GM12878 (cell line): ENCODE measurements at regions of chr5 and their contacts with region 1.

Region 1: DNA sequence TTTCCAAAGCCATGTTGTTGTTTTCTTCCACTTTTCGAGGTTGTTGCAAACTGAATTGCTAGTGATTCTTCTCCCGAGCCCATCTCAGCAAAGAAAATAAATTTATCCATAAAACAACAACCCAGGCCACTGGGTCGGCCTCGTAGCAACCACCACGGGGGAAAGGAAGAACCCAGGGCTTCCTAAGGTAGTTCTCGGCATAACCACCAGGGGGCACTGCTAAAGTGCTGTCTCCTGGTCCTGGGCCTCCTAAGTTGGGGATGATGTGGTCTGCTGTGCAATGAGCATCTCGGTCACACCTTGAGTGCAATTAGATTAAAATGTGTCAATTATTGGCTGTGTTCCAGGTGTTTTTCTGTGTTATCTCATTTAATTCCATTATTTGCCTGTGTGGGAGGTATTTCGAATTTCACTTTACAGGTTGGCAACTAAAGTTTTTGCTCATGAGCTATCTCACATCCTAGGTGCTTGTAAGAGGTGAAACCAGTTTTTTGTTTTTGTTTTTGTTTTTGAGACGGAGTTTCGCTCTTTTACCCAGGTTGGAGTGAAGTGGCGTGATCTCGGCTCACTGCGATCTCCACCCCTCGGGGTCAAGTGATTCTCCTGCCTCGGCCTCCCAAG is 102.8 kb upstream of the DAP start:
- DNase-seq: peak; percentile 8
- ATAC-seq: peak; percentile 98
- H3K4me3 ChIP-seq: no peak overlapping the region
- H3K27ac ChIP-seq: no peak overlapping the region
- H3K4me1 ChIP-seq: no peaks in the 10 kb centered on the region
- H3K27me3 ChIP-seq: peaks cover under 1 to 1% of the 10 kb centered on the region in 2 experiments; a peak in 1 of 4 replicates
- CTCF ChIP-seq: peak; percentile 75 to 93 (median 91)
- EP300 ChIP-seq: no peak
- POLR2A ChIP-seq: no peak
- RAD21 ChIP-seq: peak; percentile 66

Region 2: GRCh38 chr5:10834695-10835094 is 29.2 kb before region 1 on chr5:
- CTCF ChIA-PET with region 1: no interaction called
- POLR2A ChIA-PET with region 1: no interaction called
- RAD21 ChIA-PET with region 1: no interaction called
- SMC1A ChIA-PET with region 1: no interaction called
- in situ Hi-C with region 1: no loop called
- intact Hi-C with region 1: no loop called
- DNase-seq: no peak
- ATAC-seq: no peak
- H3K4me3 ChIP-seq: no peak overlapping the region
- H3K27ac ChIP-seq: no peak overlapping the region
- H3K4me1 ChIP-seq: no peaks in the 10 kb centered on the region
- H3K27me3 ChIP-seq: no peaks in the 10 kb centered on the region; a peak in 1 of 4 replicates
- CTCF ChIP-seq: no peak
- EP300 ChIP-seq: no peak
- POLR2A ChIP-seq: no peak
- RAD21 ChIP-seq: no peak

Region 3: DNA sequence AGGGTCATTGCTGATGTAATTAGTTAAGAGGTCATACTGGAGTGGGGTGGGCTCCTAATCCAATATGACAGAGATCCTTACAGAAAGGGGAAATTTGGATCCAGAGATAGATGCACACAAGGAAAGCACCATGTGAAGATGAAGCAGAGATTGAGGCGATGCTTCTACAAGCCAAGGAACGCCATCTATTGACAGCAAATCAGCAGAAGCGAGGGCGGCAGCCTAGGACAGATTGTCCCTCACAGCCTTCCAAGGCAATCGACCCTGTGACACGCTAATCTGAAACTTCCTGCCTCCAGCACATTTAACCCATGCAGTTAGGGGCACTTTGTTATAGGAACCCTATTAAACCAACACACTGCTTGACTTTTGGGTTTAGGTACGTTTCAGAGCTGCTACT is 182.3 kb after region 1 on chr5:
- CTCF ChIA-PET with region 1: interaction called, 6 read pairs
- POLR2A ChIA-PET with region 1: no interaction called
- RAD21 ChIA-PET with region 1: no interaction called
- SMC1A ChIA-PET with region 1: interaction called, 5 read pairs
- in situ Hi-C with region 1: no loop called
- intact Hi-C with region 1: loop called (anchors 5 kb)
- DNase-seq: no peak
- ATAC-seq: peak; percentile 57
- H3K4me3 ChIP-seq: no peak overlapping the region
- H3K27ac ChIP-seq: no peak overlapping the region
- H3K4me1 ChIP-seq: no peaks in the 10 kb centered on the region
- H3K27me3 ChIP-seq: no peaks in the 10 kb centered on the region
- CTCF ChIP-seq: peak in 1 of 3 experiments; percentile 61; a peak in 2 of 6 replicates
- EP300 ChIP-seq: no peak
- POLR2A ChIP-seq: no peak
- RAD21 ChIP-seq: peak; percentile 35; the same call in 1 of the 2 replicates

Region 4: DNA sequence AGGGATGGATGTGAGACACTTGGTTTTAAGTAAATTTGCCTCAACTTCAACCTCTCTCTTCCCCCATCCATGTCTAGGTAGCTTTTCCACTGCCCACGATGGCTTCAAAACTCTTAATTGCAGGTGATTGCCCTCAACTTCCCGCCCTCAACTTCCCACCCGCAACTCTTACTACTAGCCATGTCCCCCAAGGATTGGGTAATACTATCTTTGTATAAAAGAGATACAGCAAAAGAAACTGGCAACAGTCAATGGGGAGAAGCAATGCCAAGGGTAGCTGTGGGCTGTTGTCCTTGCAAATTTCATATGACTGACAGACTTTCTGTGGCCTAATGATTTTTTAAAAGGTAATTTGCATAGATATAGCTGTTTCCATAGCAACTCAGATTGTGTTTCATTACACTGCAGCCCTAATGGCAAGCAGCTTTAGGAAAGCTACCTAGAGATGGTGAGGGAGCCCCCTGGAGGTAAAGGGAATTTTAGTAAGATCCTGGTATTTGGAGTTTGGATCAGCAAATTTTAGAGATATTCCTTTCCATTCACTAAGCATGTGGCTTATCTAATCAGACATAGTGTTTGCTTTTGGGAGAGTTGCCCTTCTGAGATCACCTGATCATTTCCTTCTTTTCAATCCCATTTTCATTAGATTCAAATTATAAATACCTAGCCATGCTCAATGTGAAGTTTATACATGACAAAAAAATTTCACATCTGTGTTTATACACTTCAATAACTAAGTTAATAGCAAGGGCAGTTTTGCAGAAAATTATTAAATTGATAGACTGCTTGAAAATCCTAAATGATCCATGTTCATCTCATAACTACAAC is 318.8 kb after region 1 on chr5:
- CTCF ChIA-PET with region 1: interaction called, 4 read pairs
- POLR2A ChIA-PET with region 1: no interaction called
- RAD21 ChIA-PET with region 1: no interaction called
- SMC1A ChIA-PET with region 1: no interaction called
- in situ Hi-C with region 1: no loop called
- intact Hi-C with region 1: loop called (anchors 5 kb)
- DNase-seq: no peak
- ATAC-seq: peak; percentile 54
- H3K4me3 ChIP-seq: no peak overlapping the region
- H3K27ac ChIP-seq: no peak overlapping the region
- H3K4me1 ChIP-seq: no peaks in the 10 kb centered on the region
- H3K27me3 ChIP-seq: no peaks in the 10 kb centered on the region
- CTCF ChIP-seq: peak; percentile 30 to 49 (median 38); a peak in 4 of 6 replicates
- EP300 ChIP-seq: no peak
- POLR2A ChIP-seq: no peak
- RAD21 ChIP-seq: peak; percentile 55